Gastrocnemius medialis (tissue), 4 donors: ENCODE measurements at regions of chr1 and their contacts with region 1.

Region 1: GRCh38 chr1:165367375-165367993 is 11.0 kb upstream of the LMX1A start:
- DNase-seq: peak; percentile 45 to 80
- ATAC-seq: peak in 1 of 2 donors; percentile 28
- H3K4me3 ChIP-seq: no peak overlapping the region
- H3K27ac ChIP-seq: no peak overlapping the region
- H3K4me1 ChIP-seq: peaks cover 6 to 13% of the 10 kb centered on the region in 2 donors
- H3K27me3 ChIP-seq: no peaks in the 10 kb centered on the region
- CTCF ChIP-seq: peak; percentile 82 to 97 (median 89)
- POLR2A ChIP-seq: no peak

Region 2: GRCh38 chr1:165144757-165145397 is 222.6 kb before region 1 on chr1:
- in situ Hi-C with region 1: loop called in 2 of 4 experiments (anchors 10 kb)
- intact Hi-C with region 1: loop called (anchors 1 kb)
- DNase-seq: peak in 1 of 2 donors; percentile 16
- ATAC-seq: peak; percentile 72 to 80
- H3K4me3 ChIP-seq: no peak overlapping the region
- H3K27ac ChIP-seq: no peak overlapping the region
- H3K4me1 ChIP-seq: no peaks in the 10 kb centered on the region
- H3K27me3 ChIP-seq: peaks cover 0 to 13% (median 0%) of the 10 kb centered on the region in 3 donors
- CTCF ChIP-seq: peak; percentile 39 to 73 (median 52)
- POLR2A ChIP-seq: no peak

Region 3: DNA sequence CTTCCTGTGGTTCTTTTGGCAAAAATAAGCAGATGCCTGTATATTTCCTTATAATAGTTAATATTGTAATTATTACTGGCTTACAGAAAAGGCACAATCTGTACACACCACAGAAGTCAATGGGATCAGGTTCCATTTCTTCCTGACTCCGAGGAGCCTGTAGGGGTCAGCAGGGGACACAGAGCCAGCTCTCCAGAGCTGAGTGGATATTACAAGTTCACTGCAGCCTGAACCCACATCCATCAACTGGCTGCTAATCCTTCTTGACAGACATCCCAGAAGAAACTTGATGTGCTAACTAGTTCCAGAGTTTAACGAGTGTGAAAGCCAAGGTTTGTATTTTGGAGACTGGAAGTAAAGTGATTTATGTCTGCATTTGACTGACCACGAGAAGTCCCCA is 214.8 kb before region 1 on chr1:
- in situ Hi-C with region 1: loop called in 2 of 4 experiments (anchors 10 kb)
- intact Hi-C with region 1: no loop called
- DNase-seq: peak; percentile 52
- ATAC-seq: peak; percentile 95 to 99
- H3K4me3 ChIP-seq: no peak overlapping the region
- H3K27ac ChIP-seq: no peak overlapping the region
- H3K4me1 ChIP-seq: peaks cover 10 to 13% of the 10 kb centered on the region in 2 donors
- H3K27me3 ChIP-seq: peaks cover 0 to 7% (median 0%) of the 10 kb centered on the region in 3 donors
- CTCF ChIP-seq: peak in 2 of 5 experiments; percentile 15 to 41
- POLR2A ChIP-seq: no peak

Region 4: DNA sequence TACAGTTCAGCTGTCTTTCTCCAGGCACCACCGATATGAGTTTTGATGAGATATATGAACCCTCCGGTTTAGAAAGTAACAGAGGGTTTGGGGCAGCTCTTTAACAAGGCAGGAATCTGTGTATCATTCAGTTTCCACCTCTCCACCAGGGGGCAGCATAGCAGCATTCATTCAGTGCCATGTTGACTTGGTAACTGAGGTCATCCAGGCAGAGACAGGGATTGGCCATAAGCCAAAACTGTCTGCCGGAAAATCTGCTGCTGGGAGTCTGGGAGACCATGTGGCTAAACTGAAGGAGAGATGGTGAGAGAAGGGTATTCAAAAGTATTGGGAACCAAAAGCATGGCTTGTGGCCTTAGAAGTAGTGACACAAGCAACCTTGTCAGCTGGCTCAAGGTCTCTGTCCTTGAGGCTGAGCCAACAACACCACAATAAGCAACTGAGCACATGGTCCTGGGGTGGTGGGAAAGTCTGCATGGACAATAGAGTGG is 109.5 kb before region 1 on chr1:
- in situ Hi-C with region 1: loop called (anchors 5 to 10 kb)
- intact Hi-C with region 1: loop called (anchors 1 kb)
- DNase-seq: peak; percentile 56 to 75
- ATAC-seq: peak; percentile 84 to 91
- H3K4me3 ChIP-seq: no peak overlapping the region
- H3K27ac ChIP-seq: no peak overlapping the region
- H3K4me1 ChIP-seq: peaks cover 0 to 9% of the 10 kb centered on the region in 2 donors
- H3K27me3 ChIP-seq: no peaks in the 10 kb centered on the region
- CTCF ChIP-seq: peak; percentile 35 to 83 (median 77)
- POLR2A ChIP-seq: no peak